Activated CD4-positive, alpha-beta memory T cell treated with anti-CD3 and anti-CD28 coated beads for 36 hours (primary cell): ENCODE measurements at regions of chrX and their contacts with region 1.

Region 1: DNA sequence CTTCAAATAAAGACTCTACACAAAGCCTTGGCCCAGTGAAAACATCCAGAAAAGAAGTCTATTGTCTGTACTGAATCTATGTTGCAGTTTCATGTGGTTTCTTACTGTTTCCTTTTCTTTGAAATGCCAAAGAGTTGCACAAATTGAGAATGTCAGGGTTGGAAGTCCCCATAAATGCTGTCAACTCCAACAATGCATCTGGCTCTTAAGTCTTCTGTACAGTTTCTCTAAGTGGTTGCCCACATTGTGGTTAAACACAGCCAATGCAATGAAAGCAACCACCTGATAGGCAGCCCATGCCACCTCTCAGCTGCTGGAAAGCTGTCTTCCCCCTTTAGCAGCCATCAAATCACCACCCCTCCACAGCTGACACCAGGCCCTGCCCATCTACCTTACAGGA is 67.2 kb upstream of the C1GALT1C1 start:
- DNase-seq: peak; percentile 60
- H3K4me3 Mint-ChIP-seq: no peak overlapping the region
- H3K27ac Mint-ChIP-seq: peak overlapping the region; percentile 78
- H3K4me1 Mint-ChIP-seq: peaks cover 19% of the 10 kb centered on the region
- H3K27me3 Mint-ChIP-seq: no peaks in the 10 kb centered on the region

Region 2: DNA sequence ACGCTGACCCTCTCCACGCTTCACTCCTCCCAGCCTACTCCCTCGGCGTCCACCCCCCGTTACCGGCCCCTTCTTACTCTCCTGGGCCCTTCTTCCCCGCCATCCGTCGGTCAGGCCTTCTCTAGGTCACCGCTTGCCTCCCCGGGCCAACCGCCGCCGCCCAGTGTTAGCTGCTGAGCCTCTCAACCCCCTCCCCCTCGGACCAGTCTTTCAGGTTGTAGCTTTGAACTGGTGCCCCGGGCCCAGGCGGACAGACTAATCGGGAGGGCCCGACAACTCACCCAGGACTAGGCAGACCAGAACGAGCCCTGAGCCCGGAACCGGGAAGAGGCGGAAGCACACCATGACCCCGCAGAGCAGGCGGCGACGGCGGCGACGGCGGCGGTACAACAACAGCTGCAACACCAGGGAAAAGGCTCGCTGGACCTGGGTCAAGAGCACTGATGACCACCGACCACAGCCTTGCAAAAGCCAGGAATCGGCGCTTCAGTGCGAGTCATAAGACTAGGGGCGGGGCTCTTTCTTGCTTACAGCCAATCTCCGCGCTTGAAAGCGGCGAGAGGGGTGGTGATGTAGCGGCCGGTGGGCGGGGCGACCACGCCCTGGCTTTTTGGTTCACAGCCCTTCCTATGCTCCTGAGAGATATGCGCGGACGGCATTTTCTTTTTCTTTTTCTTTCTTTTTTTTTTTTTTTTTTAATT is 228.1 kb before region 1 on chrX and contains the start of gene LAMP2:
- CTCF ChIA-PET with region 1: no interaction called
- POLR2A ChIA-PET with region 1: no interaction called
- intact Hi-C with region 1: no loop called
- DNase-seq: peak; percentile 90
- H3K4me3 Mint-ChIP-seq: peak within 1 kb of the TSS; percentile 82
- H3K27ac Mint-ChIP-seq: peak within 1 kb of the TSS; percentile 83
- H3K4me1 Mint-ChIP-seq: peaks cover 16% of the 10 kb centered on the region
- H3K27me3 Mint-ChIP-seq: no peaks in the 10 kb centered on the region
- total RNA-seq, gene LAMP2: 38.5 to 38.7 TPM

Region 3: DNA sequence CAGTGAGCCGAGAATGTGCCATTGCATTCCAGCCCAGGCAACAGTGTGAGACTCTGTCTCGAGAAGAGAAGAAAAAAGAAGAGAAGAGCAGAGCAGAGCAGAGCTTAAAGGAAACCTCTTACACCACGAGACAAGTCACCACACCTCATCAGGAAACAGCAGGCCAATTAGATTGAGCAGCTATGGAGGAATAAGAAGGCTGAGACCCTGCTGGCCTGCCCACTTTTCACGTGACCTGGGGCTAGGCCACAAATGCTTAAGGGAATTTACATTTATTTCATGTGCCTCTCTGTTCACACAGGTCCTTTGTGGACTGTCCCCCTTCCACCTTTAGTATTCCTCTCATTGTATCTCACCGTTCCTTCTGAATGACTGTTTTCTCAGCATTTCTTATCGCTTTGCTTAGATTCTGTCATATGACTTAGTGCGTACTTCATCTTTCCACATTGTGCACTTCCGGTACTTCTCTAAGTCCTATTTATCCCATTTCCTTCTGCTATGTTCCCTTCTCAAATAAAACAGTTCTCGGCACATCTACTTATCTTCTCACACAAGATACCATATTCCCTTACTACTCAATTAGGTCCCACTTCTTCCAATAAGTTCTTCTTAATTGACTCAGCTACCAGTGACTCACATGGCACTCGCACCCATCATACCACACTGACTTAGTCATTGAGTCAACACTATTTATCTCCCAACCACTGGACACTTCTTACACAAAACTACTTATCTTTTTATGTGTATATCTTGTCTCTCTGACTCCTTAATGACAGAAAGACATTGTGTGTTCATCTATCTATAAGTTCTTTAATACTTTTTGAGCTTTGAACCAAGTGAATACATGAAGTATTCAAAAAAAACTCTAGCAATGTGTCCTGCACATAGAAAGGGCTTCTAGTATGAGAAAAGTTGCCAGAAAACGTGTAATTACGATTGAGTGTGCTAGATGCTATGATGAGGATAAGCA is 147.3 kb before region 1 on chrX:
- CTCF ChIA-PET with region 1: no interaction called
- POLR2A ChIA-PET with region 1: no interaction called
- intact Hi-C with region 1: loop called (anchors 1 kb)
- DNase-seq: peak; percentile 52
- H3K4me3 Mint-ChIP-seq: no peak overlapping the region
- H3K27ac Mint-ChIP-seq: peak overlapping the region; percentile 52
- H3K4me1 Mint-ChIP-seq: peaks cover 19% of the 10 kb centered on the region
- H3K27me3 Mint-ChIP-seq: no peaks in the 10 kb centered on the region

Region 4: GRCh38 chrX:120677004-120677652 is 19.9 kb before region 1 on chrX:
- CTCF ChIA-PET with region 1: no interaction called
- POLR2A ChIA-PET with region 1: interaction called, 3 read pairs
- intact Hi-C with region 1: loop called (anchors 1 kb)
- DNase-seq: no peak
- H3K4me3 Mint-ChIP-seq: no peak overlapping the region
- H3K27ac Mint-ChIP-seq: peak overlapping the region; percentile 69
- H3K4me1 Mint-ChIP-seq: peaks cover 21% of the 10 kb centered on the region
- H3K27me3 Mint-ChIP-seq: no peaks in the 10 kb centered on the region

Region 5: DNA sequence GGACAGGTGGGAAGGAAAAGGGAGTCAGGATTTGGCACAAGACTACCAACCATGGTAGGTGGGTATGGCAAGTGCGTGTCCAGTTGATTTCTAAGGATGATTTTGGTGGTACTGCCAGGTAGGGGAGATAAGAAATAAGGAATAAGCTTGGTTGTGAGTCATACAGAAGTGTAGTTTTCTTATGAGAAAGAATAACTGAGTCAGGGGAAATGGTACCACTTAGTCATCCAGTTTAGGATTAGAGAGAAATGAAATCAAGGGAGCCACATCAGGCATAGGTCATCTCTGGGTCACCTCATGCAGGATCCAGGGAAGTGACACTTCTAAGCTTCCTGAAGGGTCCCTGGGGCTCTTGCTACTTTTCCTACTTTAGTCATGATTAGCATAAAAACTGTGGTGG is 39.9 kb after region 1 on chrX:
- CTCF ChIA-PET with region 1: no interaction called
- POLR2A ChIA-PET with region 1: no interaction called
- intact Hi-C with region 1: loop called (anchors 2 kb)
- DNase-seq: peak; percentile 19
- H3K4me3 Mint-ChIP-seq: no peak overlapping the region
- H3K27ac Mint-ChIP-seq: no peak overlapping the region
- H3K4me1 Mint-ChIP-seq: peaks cover 22% of the 10 kb centered on the region
- H3K27me3 Mint-ChIP-seq: no peaks in the 10 kb centered on the region

Region 6: GRCh38 chrX:120761810-120762209 is 64.8 kb after region 1 on chrX:
- CTCF ChIA-PET with region 1: no interaction called
- POLR2A ChIA-PET with region 1: no interaction called
- intact Hi-C with region 1: loop called (anchors 2 kb)
- DNase-seq: no peak
- H3K4me3 Mint-ChIP-seq: no peak overlapping the region
- H3K27ac Mint-ChIP-seq: no peak overlapping the region
- H3K4me1 Mint-ChIP-seq: peaks cover 3% of the 10 kb centered on the region
- H3K27me3 Mint-ChIP-seq: no peaks in the 10 kb centered on the region